Caco-2 (cell line): ENCODE measurements at regions of chr10 and their contacts with region 1.

Region 1: GRCh38 chr10:46539596-46540411 is 16.7 kb downstream of the GPRIN2 start:
- DNase-seq: peak; percentile 90 to 94
- H3K4me3 ChIP-seq: no peak overlapping the region
- H3K4me3 Mint-ChIP-seq: peak overlapping the region; percentile 54
- H3K27ac Mint-ChIP-seq: peak overlapping the region; percentile 98
- H3K4me1 ChIP-seq: peaks cover 53% of the 10 kb centered on the region
- H3K4me1 Mint-ChIP-seq: peaks cover 55% of the 10 kb centered on the region
- H3K27me3 ChIP-seq: no peaks in the 10 kb centered on the region
- H3K27me3 Mint-ChIP-seq: no peaks in the 10 kb centered on the region
- CTCF ChIP-seq: no peak

Region 2: DNA sequence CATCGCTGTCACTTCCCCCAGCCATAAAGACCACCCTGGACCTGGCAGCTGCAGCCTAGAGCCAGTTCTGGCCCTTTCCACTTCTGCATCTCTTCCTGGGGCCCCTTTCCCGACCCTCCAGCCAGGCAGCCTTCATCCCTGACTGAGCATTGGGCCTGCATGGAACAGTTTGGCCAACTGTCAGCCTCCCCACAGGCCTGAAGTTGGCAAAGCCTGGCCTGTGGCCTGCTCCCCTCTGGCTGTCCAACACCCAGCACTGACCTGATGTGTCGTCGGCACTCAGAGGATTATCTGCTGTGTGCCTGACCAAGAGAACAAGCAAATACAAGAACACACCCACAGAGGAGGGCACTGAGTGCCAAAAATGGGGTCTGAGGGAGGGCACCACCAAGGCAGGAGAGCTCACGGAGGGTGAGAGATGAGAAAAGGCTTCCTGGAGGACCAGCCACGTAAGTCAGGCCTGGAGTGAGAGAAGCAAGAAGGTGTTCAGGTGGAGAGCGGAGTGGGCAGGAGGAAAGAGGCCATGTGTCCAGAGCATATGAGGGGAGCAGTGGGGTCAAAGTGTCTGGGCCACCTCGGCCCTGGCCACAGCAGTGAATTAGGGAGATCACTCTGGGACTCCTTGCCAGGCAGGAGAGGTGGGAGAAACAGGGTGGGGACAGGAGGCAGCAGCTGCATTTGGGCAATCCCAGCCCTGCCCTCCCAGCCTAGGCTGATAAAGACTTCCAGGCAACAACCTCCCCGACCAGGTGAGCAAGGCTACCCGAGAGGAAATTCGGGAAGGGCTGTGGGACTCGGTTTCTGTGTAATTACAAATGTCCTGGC is 12.1 kb after region 1 on chr10:
- CTCF ChIA-PET with region 1: interaction called, 7 read pairs
- POLR2A ChIA-PET with region 1: interaction called, 6 read pairs
- intact Hi-C with region 1: loop called (anchors 1 kb)
- DNase-seq: peak; percentile 12 to 44
- H3K4me3 ChIP-seq: no peak overlapping the region
- H3K4me3 Mint-ChIP-seq: no peak overlapping the region
- H3K27ac Mint-ChIP-seq: no peak overlapping the region
- H3K4me1 ChIP-seq: peaks cover 31% of the 10 kb centered on the region; the same call in 1 of the 2 replicates
- H3K4me1 Mint-ChIP-seq: no peaks in the 10 kb centered on the region
- H3K27me3 ChIP-seq: no peaks in the 10 kb centered on the region
- H3K27me3 Mint-ChIP-seq: no peaks in the 10 kb centered on the region
- CTCF ChIP-seq: no peak